ENCODE measurements at regions of chr12 and their contacts with region 1.

Region 1: DNA sequence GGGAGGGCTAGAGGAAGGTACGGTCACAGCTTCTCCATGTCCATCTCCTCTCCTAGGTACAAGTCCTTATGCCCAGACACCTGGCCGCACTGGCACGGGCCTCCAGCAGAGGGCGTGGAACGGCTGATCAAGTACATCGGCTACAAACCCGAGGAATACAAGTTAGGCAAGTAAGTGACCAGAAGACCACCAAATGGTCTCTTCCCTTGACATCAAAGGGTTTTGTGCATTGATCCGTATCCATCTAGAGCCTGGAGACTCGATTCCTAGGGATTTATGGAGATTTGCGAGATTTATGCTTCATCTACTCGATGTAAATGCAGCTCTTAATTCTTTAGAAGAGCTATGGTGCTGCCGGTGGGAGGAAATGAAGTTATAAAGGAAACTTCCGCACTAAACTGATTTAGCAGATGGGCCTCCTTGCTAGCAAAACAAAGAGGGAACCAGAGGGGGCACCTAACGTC is 44.2 kb downstream of the KCTD10 start:
- DNase-seq: peak; percentile 29 to 95 (median 79)
- ATAC-seq: peak; percentile 92
- H3K4me3 ChIP-seq: no peak overlapping the region
- H3K27ac ChIP-seq: no peak overlapping the region
- H3K4me1 ChIP-seq: no peaks in the 10 kb centered on the region
- H3K27me3 ChIP-seq: no peaks in the 10 kb centered on the region
- CTCF ChIP-seq: peak; percentile 77 to 80

Region 2: GRCh38 chr12:109477185-109477962 is 44.5 kb after region 1 on chr12 and contains the starts of genes KCTD10 and UBE3B:
- intact Hi-C with region 1: loop called in 1 of 2 experiments (anchors 2 kb)
- DNase-seq: peak; percentile 89 to 93 (median 92)
- ATAC-seq: peak; percentile 99
- H3K4me3 ChIP-seq: peak within 1 kb of the TSS; percentile 72 to 90
- H3K27ac ChIP-seq: peak within 1 kb of the TSS; percentile 89 to 97
- H3K4me1 ChIP-seq: peaks cover 20 to 50% of the 10 kb centered on the region in 2 donors
- H3K27me3 ChIP-seq: no peaks in the 10 kb centered on the region
- CTCF ChIP-seq: no peak
- polyA plus RNA-seq, gene KCTD10: 42.7 to 51.0 (median 47.3) TPM
- polyA plus RNA-seq, gene UBE3B: 30.5 to 36.2 (median 33.3) TPM

Region 3: DNA sequence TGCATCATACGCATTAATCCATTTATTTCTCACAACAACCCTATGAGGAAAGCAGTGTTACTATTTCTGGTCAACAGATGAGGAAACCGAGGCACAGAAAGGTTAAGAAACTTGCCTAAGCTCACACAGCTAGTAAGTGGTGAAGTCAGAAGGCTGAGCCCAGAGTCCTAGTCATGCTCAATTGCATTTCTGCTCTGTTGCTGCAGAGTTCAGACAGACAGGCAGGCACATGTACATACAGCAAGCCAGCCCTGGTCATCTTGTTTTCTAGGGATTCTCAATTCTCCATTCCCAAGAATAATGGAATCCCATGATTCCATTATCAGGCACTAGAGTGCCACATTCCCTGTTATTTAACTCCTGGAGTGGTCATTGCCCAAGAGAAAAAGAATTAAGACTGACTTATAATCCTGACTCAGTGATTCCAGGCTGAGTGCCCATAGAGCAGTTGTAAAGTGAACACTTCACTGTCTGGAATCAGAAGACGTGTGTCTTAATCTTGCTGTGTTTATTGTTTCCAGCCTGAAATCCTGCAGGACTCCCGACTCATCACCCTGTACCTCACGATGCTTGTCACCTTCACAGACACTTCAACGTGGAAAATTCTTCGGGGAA is 55.3 kb after region 1 on chr12:
- intact Hi-C with region 1: no loop called
- DNase-seq: no peak
- ATAC-seq: no peak
- H3K4me3 ChIP-seq: no peak overlapping the region
- H3K27ac ChIP-seq: no peak overlapping the region
- H3K4me1 ChIP-seq: no peaks in the 10 kb centered on the region
- H3K27me3 ChIP-seq: no peaks in the 10 kb centered on the region
- CTCF ChIP-seq: no peak

Measured in left lung (tissue), 14 donors.